Naive thymus-derived CD4-positive, alpha-beta T cell (primary cell): ENCODE measurements at regions of chr2 and their contacts with region 1.

Region 1: DNA sequence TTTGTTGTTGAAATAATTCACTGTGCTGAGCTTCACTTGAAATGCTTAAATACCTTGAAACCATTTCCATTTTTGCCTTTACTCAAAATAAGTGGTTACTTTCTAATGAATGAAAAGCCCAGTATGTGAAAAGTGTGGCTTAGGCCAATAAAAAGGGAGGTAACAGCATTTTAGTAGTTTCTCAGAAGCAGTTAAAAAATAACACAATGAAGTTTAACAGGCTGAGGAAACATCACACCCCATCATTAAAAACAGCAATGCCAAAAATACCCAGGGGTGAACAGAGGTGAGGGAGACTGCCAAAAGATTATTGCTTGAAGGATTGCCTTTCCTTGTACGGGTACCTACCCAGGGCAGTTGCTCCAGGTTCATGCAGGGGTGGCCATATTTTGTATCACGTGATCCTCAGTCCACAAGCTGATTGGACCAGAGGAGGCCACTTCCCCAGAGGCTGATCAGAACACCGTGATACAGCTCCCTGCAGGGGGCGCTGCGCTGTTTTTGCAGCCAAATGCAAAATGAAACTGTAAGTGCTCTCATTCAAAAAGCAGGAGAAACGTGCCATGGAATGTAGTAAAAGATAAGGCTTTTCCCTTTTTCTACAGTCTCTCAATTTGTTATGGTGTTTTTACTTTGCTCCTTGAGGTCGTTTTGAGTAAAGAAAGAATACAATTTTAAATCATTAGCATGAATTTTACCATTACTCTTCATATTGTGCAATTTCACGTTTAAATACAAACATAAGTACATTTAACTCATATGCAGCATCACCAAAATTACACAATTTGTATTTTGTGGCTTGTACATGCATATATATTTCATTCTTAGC is 70.2 kb upstream of the SH3BP4 start:
- DNase-seq: peak in 2 of 9 donors; percentile 13 to 36
- ATAC-seq: peak; percentile 60
- H3K4me3 ChIP-seq: no peak overlapping the region
- H3K4me3 Mint-ChIP-seq: no peak overlapping the region
- H3K27ac ChIP-seq: no peak overlapping the region
- H3K27ac Mint-ChIP-seq: no peak overlapping the region
- H3K4me1 ChIP-seq: no peaks in the 10 kb centered on the region
- H3K4me1 Mint-ChIP-seq: no peaks in the 10 kb centered on the region
- H3K27me3 ChIP-seq: no peaks in the 10 kb centered on the region
- H3K27me3 Mint-ChIP-seq: peaks cover 0 to 31% (median 6%) of the 10 kb centered on the region in 5 donors

Region 2: DNA sequence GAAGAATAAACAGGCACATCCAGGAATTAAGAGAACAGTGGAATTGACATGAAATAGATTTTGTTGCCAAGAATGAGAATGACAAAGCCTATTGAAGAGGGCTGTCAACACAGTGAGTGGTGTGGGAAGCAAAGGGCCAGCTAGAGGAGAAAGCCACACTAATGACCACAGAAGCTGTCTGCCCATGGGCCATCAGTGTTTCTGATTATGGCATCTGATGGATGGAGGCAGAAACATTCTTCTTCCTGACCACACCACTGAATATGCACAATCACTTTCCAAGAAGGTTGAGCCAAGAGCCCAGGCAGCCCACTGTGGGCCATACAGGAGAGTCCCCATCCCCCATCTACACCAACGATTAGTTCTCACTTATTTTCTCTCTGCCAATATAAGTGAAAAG is 75.8 kb before region 1 on chr2:
- CTCF ChIA-PET with region 1: no interaction called
- POLR2A ChIA-PET with region 1: no interaction called
- intact Hi-C with region 1: loop called in 1 of 2 experiments (anchors 2 kb)
- DNase-seq: no peak
- ATAC-seq: no peak
- H3K4me3 ChIP-seq: no peak overlapping the region
- H3K4me3 Mint-ChIP-seq: no peak overlapping the region
- H3K27ac ChIP-seq: no peak overlapping the region
- H3K27ac Mint-ChIP-seq: no peak overlapping the region
- H3K4me1 ChIP-seq: no peaks in the 10 kb centered on the region
- H3K4me1 Mint-ChIP-seq: peaks cover 0 to 1% (median 0%) of the 10 kb centered on the region in 7 donors
- H3K27me3 ChIP-seq: no peaks in the 10 kb centered on the region
- H3K27me3 Mint-ChIP-seq: peaks cover 5 to 31% (median 21%) of the 10 kb centered on the region in 5 donors

Region 3: GRCh38 chr2:235685024-235685721 is 803.5 kb after region 1 on chr2:
- CTCF ChIA-PET with region 1: no interaction called
- POLR2A ChIA-PET with region 1: no interaction called
- intact Hi-C with region 1: no loop called
- DNase-seq: no peak
- ATAC-seq: peak; percentile 29
- H3K4me3 ChIP-seq: no peak overlapping the region
- H3K4me3 Mint-ChIP-seq: no peak overlapping the region
- H3K27ac ChIP-seq: no peak overlapping the region
- H3K27ac Mint-ChIP-seq: peak overlapping the region in 2 of 9 donors; percentile 29 to 47
- H3K4me1 ChIP-seq: peaks cover 0 to 6% of the 10 kb centered on the region in 2 donors
- H3K4me1 Mint-ChIP-seq: peaks cover 0 to 13% (median 0%) of the 10 kb centered on the region in 7 donors
- H3K27me3 ChIP-seq: no peaks in the 10 kb centered on the region
- H3K27me3 Mint-ChIP-seq: peaks cover 0 to 20% (median 5%) of the 10 kb centered on the region in 5 donors